Aorta (tissue), 5 donors: ENCODE measurements at regions of chr15 and their contacts with region 1.

Region 1: GRCh38 chr15:53559364-53560277 is 199.8 kb downstream of the WDR72 start:
- DNase-seq: no peak
- ATAC-seq: no peak
- H3K4me3 ChIP-seq: no peak overlapping the region
- H3K27ac ChIP-seq: no peak overlapping the region
- H3K4me1 ChIP-seq: no peaks in the 10 kb centered on the region
- H3K27me3 ChIP-seq: no peaks in the 10 kb centered on the region

Region 2: DNA sequence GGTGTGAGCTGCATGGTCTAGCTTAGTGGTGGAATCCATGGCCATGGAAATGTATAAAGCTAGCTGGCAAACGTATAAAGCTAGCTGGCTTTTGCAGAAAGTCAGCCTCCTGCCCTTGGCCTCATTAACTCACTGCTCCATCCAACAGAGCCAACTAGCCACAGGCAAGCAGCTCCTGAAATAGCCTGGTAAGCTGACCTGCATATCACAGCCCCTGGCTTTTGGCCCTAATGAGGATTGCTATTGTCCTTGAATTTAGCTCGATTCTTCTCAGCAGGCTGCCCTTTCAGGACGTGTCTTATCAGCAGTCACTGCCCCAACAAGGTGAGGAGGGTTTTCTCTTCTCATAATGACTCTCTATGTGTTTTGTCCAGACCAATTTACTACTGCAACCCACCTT is 246.9 kb before region 1 on chr15:
- intact Hi-C with region 1: no loop called
- DNase-seq: no peak
- ATAC-seq: no peak
- H3K4me3 ChIP-seq: no peak overlapping the region
- H3K27ac ChIP-seq: no peak overlapping the region
- H3K4me1 ChIP-seq: no peaks in the 10 kb centered on the region
- H3K27me3 ChIP-seq: peaks cover 0 to 5% of the 10 kb centered on the region in 2 donors

Region 3: DNA sequence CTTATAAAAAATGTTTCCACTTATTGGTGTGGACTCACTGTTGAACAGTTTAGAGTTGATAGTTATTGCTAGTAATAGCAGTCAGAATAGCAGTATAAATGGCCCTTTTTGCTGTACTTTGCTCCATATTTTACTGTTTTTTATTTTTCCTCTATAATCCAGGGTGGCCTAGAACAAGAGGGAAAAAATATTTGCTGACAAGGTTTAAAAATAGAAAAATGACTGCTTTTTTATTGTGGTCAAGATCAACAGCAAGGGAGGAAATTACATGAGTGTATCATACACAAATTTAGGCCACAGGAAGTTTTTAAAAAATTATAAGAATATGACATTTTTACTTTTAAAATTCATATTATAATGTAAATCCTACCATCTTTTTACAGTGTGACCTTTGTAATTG is 69.3 kb before region 1 on chr15:
- intact Hi-C with region 1: no loop called
- DNase-seq: no peak
- ATAC-seq: no peak
- H3K4me3 ChIP-seq: no peak overlapping the region
- H3K27ac ChIP-seq: no peak overlapping the region
- H3K4me1 ChIP-seq: no peaks in the 10 kb centered on the region
- H3K27me3 ChIP-seq: peaks cover 0 to 2% of the 10 kb centered on the region in 2 donors

Region 4: DNA sequence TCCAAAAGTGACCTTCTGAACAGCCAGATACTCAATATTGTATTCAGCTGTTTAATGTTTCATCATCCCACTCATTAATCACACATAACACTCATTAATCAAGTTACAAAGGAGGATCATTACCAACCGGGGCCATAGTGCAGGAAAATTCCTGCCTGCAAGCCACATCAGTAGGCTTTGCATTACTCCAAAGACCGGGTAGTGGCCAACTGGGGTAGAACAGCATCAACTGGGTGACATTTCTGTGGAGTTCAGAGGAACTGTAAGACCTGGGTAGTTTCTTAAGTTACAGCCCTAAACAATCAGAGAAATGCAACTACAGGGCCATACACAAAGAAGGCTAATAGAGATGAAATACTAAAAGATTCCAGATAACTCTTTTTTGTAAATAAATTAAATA is 53.3 kb before region 1 on chr15:
- intact Hi-C with region 1: loop called in 1 of 2 experiments (anchors 10 kb)
- DNase-seq: no peak
- ATAC-seq: no peak
- H3K4me3 ChIP-seq: no peak overlapping the region
- H3K27ac ChIP-seq: no peak overlapping the region
- H3K4me1 ChIP-seq: no peaks in the 10 kb centered on the region
- H3K27me3 ChIP-seq: no peaks in the 10 kb centered on the region

Region 5: DNA sequence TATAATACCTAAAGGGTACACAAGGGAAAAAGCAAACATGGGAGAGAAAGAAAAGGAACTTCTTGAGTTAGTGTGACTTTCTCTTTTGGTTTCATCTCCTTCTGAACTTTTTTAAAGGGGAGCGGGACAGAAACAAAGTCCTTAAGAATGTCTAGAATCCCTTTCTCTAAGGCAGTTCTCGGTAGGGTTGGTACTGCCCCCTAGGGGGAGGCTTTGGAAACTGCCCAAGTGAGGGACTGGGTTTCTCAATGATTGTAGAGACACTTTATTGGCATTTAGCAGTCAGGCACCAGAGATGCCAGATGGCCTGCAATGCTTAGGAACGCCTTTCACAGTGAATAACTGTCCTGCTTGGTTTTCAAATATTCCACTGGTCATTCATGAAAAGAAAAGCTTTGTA is 27.2 kb after region 1 on chr15:
- intact Hi-C with region 1: no loop called
- DNase-seq: no peak
- ATAC-seq: no peak
- H3K4me3 ChIP-seq: no peak overlapping the region
- H3K27ac ChIP-seq: no peak overlapping the region
- H3K4me1 ChIP-seq: no peaks in the 10 kb centered on the region
- H3K27me3 ChIP-seq: no peaks in the 10 kb centered on the region

Region 6: DNA sequence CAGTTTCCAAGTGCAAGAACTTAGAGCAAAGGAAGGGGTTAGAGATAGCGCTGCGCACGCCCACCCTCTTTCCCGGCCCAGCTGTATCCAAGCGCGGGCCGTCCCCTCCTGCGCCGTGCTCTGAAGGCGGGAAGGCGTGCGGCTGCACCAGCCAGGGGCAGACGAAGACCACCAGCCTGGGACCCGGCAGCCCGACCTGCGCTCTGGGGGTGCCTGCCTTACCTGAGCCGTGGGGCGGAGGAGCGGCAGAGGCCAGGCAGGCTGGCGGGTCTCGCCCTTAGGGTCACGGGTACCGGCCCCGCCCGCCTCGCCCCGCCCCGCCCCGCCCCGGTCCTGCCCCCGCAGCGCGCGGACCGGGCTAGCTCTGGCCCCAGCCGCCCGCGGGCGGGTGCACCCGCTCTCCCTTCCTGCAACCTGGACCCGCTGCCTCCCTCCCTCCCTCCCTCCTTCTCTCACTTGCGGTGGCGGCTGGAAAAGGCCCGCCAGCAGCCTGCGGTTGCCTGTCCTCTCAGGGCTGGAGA is 199.8 kb after region 1 on chr15 and contains the start of gene WDR72:
- intact Hi-C with region 1: no loop called
- DNase-seq: no peak
- ATAC-seq: peak; percentile 8
- H3K4me3 ChIP-seq: peak within 1 kb of the TSS; percentile 47 to 52
- H3K27ac ChIP-seq: no peak within 1 kb of the TSS
- H3K4me1 ChIP-seq: no peaks in the 10 kb centered on the region
- H3K27me3 ChIP-seq: no peaks in the 10 kb centered on the region
- total RNA-seq, gene WDR72: 0.16 TPM in 1 of 2 donors, not detected in the other